Adrenal gland (tissue), 19 donors: ENCODE measurements at regions of chr4 and their contacts with region 1.

Region 1: DNA sequence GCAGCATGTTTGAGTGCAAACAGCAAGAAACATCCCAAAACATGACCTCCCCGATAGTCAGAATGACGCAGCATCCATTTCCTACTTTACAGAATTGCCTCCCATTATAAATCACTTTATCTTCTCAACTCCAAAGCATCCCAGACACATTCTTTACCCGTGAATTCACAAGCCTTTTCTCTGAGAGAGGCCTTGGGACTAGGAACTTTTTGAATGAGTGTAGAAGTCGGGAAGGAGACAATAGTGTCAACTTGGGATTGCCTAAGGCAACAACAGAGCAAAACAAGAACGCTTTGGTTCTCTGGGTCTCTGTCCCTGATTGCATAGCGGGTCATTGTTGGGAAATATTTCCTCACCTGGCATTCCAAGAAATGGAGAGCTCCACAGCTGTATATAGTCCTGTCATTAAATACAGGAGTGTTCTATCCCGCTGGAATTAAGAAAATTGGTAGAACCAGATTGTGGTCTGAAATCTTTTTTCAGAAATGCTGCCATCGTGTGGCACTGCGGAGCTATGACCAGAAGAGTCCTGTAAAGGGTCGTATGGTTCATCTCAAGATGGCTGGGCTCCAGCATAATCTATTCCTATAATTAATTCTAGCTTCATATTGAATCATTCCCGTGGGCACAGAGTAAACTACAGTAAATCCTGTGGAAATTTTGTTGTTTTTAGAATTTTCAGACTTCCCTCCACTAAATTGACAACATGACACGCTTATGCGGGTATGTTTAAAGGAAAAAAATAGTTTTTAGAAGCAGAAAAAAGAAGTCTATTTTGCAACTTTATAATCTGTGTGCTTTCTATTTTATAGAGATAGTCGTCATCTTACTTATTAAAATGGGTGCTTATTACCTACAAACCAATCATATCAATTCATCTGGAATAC is 2.0 kb upstream of the SPP1 start:
- DNase-seq: peak; percentile 63 to 85 (median 68)
- H3K4me3 ChIP-seq: peak overlapping the region in 1 of 4 donors; percentile 41
- H3K27ac ChIP-seq: peak overlapping the region in 1 of 5 donors; percentile 37
- H3K4me1 ChIP-seq: peaks cover 0 to 6% of the 10 kb centered on the region in 2 donors
- H3K27me3 ChIP-seq: no peaks in the 10 kb centered on the region
- CTCF ChIP-seq: peak; percentile 61 to 89 (median 82)
- POLR2A ChIP-seq: no peak

Region 2: GRCh38 chr4:87679449-87680169 is 293.9 kb before region 1 on chr4:
- intact Hi-C with region 1: no loop called
- DNase-seq: peak; percentile 21 to 54 (median 35)
- H3K4me3 ChIP-seq: no peak overlapping the region
- H3K27ac ChIP-seq: no peak overlapping the region
- H3K4me1 ChIP-seq: peaks cover 0 to 4% of the 10 kb centered on the region in 2 donors
- H3K27me3 ChIP-seq: no peaks in the 10 kb centered on the region
- CTCF ChIP-seq: peak; percentile 61 to 82 (median 78)
- POLR2A ChIP-seq: no peak

Region 3: GRCh38 chr4:87856816-87857215 is 116.7 kb before region 1 on chr4:
- intact Hi-C with region 1: loop called (anchors 5 kb)
- DNase-seq: no peak
- H3K4me3 ChIP-seq: no peak overlapping the region
- H3K27ac ChIP-seq: no peak overlapping the region
- H3K4me1 ChIP-seq: no peaks in the 10 kb centered on the region
- H3K27me3 ChIP-seq: no peaks in the 10 kb centered on the region
- CTCF ChIP-seq: no peak
- POLR2A ChIP-seq: no peak

Region 4: DNA sequence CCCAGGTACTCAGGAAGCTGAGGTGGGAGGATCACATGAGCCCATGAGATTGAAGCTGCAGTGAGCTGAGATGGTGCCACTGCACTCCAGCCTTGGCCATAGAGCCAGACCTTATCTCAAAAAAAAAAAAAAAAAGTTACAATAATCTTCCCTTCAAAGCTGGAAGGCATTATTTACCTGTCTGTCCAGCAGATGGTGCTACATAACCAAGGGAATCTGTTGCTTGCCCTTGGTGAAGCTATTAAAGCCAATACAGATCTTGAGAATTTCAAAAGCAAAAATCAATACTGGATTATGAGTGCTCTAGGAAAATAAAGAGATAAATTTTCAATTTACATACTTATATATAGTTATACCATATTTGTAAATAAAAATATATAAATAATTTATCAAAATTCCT is 59.8 kb after region 1 on chr4:
- intact Hi-C with region 1: no loop called
- DNase-seq: peak; percentile 24 to 66 (median 59)
- H3K4me3 ChIP-seq: no peak overlapping the region
- H3K27ac ChIP-seq: no peak overlapping the region
- H3K4me1 ChIP-seq: peaks cover 11 to 12% of the 10 kb centered on the region in 2 donors
- H3K27me3 ChIP-seq: no peaks in the 10 kb centered on the region
- CTCF ChIP-seq: peak; percentile 57 to 85 (median 66)
- POLR2A ChIP-seq: no peak